MCF 10A (cell line): ENCODE measurements at regions of chr6 and their contacts with region 1.

Region 1: GRCh38 chr6:74409447-74409846 is 713.4 kb downstream of the CD109 start:
- DNase-seq: peak; percentile 62
- H3K4me3 Mint-ChIP-seq: no peak overlapping the region
- H3K27ac Mint-ChIP-seq: no peak overlapping the region
- H3K4me1 Mint-ChIP-seq: no peaks in the 10 kb centered on the region
- H3K27me3 Mint-ChIP-seq: no peaks in the 10 kb centered on the region
- CTCF ChIP-seq: peak; percentile 70

Region 2: GRCh38 chr6:73969971-73970970 is 439.2 kb before region 1 on chr6:
- CTCF ChIA-PET with region 1: interaction called, 9 read pairs
- POLR2A ChIA-PET with region 1: no interaction called
- intact Hi-C with region 1: loop called (anchors 2 kb)
- DNase-seq: peak; percentile 79
- H3K4me3 Mint-ChIP-seq: no peak overlapping the region
- H3K27ac Mint-ChIP-seq: peak overlapping the region; percentile 42
- H3K4me1 Mint-ChIP-seq: no peaks in the 10 kb centered on the region
- H3K27me3 Mint-ChIP-seq: no peaks in the 10 kb centered on the region
- CTCF ChIP-seq: peak; percentile 68

Region 3: GRCh38 chr6:74574794-74575193 is 165.3 kb after region 1 on chr6:
- CTCF ChIA-PET with region 1: interaction called, 3 read pairs
- POLR2A ChIA-PET with region 1: no interaction called
- intact Hi-C with region 1: loop called (anchors 2 kb)
- DNase-seq: peak; percentile 44
- H3K4me3 Mint-ChIP-seq: no peak overlapping the region
- H3K27ac Mint-ChIP-seq: no peak overlapping the region
- H3K4me1 Mint-ChIP-seq: peaks cover 19% of the 10 kb centered on the region
- H3K27me3 Mint-ChIP-seq: no peaks in the 10 kb centered on the region
- CTCF ChIP-seq: peak; percentile 30

Region 4: DNA sequence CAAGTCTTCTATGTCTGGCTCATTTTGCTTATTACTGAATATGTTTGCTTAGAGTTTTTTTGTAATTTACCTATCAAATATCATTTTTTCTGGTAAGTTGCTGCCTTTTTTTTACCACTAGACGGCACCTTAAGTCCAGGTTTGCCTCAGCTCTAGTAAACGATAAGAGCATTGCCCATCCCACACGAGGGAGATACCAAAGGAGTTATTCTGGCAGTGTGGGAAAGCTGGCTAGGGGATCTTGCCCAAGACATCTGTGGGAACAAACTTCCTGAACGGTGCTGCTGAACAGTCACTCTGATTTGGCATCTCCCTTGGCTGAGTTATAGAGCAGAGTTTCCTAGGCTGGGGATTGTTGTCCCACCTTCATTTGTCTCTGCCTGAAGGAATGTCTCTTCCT is 490.0 kb after region 1 on chr6:
- CTCF ChIA-PET with region 1: interaction called, 5 read pairs
- POLR2A ChIA-PET with region 1: no interaction called
- intact Hi-C with region 1: loop called (anchors 5 kb)
- DNase-seq: peak; percentile 61
- H3K4me3 Mint-ChIP-seq: no peak overlapping the region
- H3K27ac Mint-ChIP-seq: no peak overlapping the region
- H3K4me1 Mint-ChIP-seq: no peaks in the 10 kb centered on the region
- H3K27me3 Mint-ChIP-seq: no peaks in the 10 kb centered on the region
- CTCF ChIP-seq: peak; percentile 40

Region 5: DNA sequence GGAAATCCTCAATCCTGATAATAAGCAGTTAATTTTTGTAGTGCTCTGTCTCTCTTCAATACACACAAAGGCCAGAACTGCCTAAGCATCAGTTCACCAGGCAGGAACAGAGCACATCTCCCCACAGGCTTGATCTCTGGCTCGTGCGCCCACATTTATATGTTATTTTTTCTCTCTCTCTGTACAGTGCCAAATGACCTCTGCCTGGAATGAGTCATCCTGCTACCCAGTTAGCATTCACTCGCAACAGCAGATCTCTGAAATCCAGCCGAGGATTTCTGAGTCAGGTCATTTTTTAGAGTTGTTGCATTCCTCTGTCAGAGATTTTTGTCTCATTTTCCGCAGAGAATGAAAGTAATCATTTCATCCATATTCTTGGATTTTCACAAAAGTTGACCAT is 689.3 kb after region 1 on chr6:
- CTCF ChIA-PET with region 1: interaction called, 3 read pairs
- POLR2A ChIA-PET with region 1: no interaction called
- intact Hi-C with region 1: loop called (anchors 1 kb)
- DNase-seq: peak; percentile 88
- H3K4me3 Mint-ChIP-seq: no peak overlapping the region
- H3K27ac Mint-ChIP-seq: peak overlapping the region; percentile 71
- H3K4me1 Mint-ChIP-seq: peaks cover 13% of the 10 kb centered on the region
- H3K27me3 Mint-ChIP-seq: no peaks in the 10 kb centered on the region
- CTCF ChIP-seq: no peak